ENCODE measurements at regions of chr2 and their contacts with region 1.

Region 1: GRCh38 chr2:38128653-38129052 is 52.7 kb upstream of the CYP1B1 start:
- DNase-seq: no peak
- H3K4me3 ChIP-seq: no peak overlapping the region
- H3K27ac ChIP-seq: no peak overlapping the region
- H3K4me1 ChIP-seq: no peaks in the 10 kb centered on the region
- H3K27me3 ChIP-seq: no peaks in the 10 kb centered on the region
- CTCF ChIP-seq: no peak
- POLR2A ChIP-seq: no peak

Region 2: DNA sequence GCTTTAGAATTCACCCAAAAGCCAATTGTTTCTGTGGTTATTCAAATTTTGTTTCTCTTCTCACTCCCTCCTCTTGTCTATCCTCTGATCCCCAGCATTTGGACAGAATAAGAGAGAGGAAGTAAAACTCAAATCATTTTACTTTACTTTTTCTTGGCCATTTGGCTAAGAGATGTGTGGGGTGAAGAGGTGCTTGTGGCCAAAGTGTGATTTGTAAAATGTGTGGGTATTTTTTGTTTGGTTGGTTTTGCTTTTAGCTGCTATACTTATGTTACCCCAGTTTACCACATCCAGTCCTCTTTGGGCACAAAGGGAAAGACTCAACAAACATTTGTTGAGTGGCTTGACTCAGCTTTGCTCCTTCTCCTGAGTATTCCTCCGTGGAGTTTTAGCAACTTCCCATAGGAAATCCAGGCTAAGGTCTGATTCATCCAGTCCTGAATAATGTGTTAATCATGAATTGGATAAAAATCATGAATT is 56.4 kb after region 1 on chr2:
- intact Hi-C with region 1: loop called (anchors 10 kb)
- DNase-seq: no peak
- H3K4me3 ChIP-seq: no peak overlapping the region
- H3K27ac ChIP-seq: no peak overlapping the region
- H3K4me1 ChIP-seq: no peaks in the 10 kb centered on the region
- H3K27me3 ChIP-seq: no peaks in the 10 kb centered on the region
- CTCF ChIP-seq: no peak
- POLR2A ChIP-seq: no peak

Measured in prostate gland (tissue), 2 donors.